A673 (cell line): ENCODE measurements at regions of chr7 and their contacts with region 1.

Region 1: DNA sequence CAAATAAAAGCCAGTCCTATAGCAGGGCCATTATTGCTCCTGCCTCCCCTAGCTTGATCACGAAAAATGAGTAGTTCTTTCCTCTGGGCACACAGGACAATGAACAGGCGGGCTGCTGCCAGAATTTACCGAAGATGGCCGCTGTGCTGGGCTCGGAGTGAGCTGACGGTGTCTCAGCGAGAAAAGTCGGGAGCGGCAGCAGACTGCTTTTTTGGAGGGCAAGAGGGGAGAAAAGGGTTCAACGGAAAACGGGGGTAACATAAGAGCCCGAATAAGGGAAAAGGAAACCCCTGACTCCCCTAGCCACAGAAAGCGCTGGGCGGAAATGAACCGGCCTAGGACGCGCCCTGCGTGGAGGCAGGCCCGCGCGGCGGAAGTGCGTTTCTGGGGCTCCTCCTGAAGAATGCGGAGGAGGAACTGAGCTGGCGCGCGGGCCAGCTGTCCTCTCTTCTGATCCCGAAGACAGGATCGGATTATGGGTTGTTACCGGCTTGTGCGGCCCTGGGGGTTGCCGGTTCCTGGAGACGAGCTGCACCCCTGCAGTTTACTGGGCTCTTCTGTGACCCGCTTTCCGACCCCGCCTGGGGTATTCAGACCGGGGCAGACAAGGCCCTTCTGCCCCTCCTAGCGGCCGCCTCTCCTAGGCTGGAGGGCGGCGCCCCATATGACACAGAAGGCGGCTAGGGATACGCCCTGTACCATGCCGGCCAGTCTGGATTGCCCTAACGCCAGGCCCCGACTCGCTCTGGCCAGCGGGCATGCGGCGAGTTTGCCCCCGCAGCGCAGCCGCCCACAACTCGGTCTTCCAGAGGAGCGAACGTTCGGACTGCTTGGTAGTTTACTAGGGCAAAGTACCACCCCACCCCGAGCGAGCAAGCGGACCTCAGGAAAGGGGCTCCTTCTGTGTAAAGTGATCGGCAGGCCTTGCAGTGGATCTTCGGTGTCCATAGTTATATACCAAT is 30.1 kb upstream of the KMT2E start:
- DNase-seq: peak; percentile 92
- H3K4me3 ChIP-seq: peak overlapping the region; percentile 60
- H3K27ac ChIP-seq: peak overlapping the region; percentile 97
- H3K4me1 ChIP-seq: peaks cover 77% of the 10 kb centered on the region
- H3K27me3 ChIP-seq: no peaks in the 10 kb centered on the region
- CTCF ChIP-seq: peak; percentile 36; the same call in 1 of the 2 replicates

Region 2: DNA sequence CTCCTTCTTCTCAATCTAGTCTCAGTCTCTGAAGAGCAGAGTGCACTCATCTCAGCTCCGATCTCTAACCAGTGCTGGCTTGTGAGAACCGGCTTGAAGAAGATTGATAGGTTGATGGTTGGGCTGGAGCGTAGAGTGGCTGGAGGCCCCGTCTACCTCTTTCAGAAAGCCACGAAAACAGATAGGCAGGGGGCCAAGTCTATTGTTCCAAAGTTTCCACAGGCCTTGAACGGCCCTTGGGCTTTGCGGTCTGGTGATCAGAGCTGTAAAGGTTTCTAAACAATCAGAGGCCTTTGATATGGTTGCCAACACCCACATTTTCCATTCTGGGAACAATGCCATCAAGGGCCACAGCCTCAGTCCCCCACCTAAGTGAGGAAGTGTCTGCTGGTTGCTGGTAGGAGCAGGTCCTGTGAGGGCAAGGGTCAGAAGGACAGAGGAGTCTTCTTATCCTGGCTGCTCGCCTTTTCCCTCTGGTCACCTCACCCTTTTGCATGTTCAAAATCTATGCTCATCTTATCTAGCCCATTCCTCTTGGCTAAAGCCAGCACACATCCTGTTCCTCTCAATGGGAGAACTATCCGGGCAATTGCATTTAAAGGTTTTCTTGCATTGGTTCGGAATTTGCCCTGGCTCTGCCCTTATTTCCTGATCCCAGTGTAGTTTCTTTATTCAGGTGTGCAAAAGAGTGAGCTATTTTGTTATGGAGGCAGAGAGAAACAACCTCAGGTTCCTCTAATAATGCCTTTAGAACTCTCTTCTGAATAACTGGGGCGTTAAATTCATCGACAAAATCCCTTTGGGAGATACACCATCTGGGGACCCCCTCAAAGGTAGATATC is 40.1 kb before region 1 on chr7:
- CTCF ChIA-PET with region 1: no interaction called
- POLR2A ChIA-PET with region 1: no interaction called
- intact Hi-C with region 1: loop called (anchors 2 kb)
- DNase-seq: no peak
- H3K4me3 ChIP-seq: no peak overlapping the region
- H3K27ac ChIP-seq: no peak overlapping the region
- H3K4me1 ChIP-seq: peaks cover 17% of the 10 kb centered on the region
- H3K27me3 ChIP-seq: no peaks in the 10 kb centered on the region
- CTCF ChIP-seq: no peak

Region 3: GRCh38 chr7:105106473-105106872 is 122.6 kb after region 1 on chr7:
- CTCF ChIA-PET with region 1: no interaction called
- POLR2A ChIA-PET with region 1: no interaction called
- intact Hi-C with region 1: loop called (anchors 5 kb)
- DNase-seq: peak; percentile 11
- H3K4me3 ChIP-seq: no peak overlapping the region
- H3K27ac ChIP-seq: peak overlapping the region; percentile 64
- H3K4me1 ChIP-seq: peaks cover 16% of the 10 kb centered on the region
- H3K27me3 ChIP-seq: no peaks in the 10 kb centered on the region
- CTCF ChIP-seq: no peak

Region 4: GRCh38 chr7:105315357-105315756 is 331.5 kb after region 1 on chr7:
- CTCF ChIA-PET with region 1: no interaction called
- POLR2A ChIA-PET with region 1: no interaction called
- intact Hi-C with region 1: no loop called
- DNase-seq: no peak
- H3K4me3 ChIP-seq: no peak overlapping the region
- H3K27ac ChIP-seq: no peak overlapping the region
- H3K4me1 ChIP-seq: no peaks in the 10 kb centered on the region
- H3K27me3 ChIP-seq: no peaks in the 10 kb centered on the region
- CTCF ChIP-seq: no peak

Region 5: GRCh38 chr7:105336009-105336408 is 352.1 kb after region 1 on chr7:
- CTCF ChIA-PET with region 1: interaction called, 3 read pairs
- POLR2A ChIA-PET with region 1: no interaction called
- intact Hi-C with region 1: loop called (anchors 5 kb)
- DNase-seq: peak; percentile 29
- H3K4me3 ChIP-seq: no peak overlapping the region
- H3K27ac ChIP-seq: no peak overlapping the region
- H3K4me1 ChIP-seq: peaks cover 6% of the 10 kb centered on the region
- H3K27me3 ChIP-seq: no peaks in the 10 kb centered on the region
- CTCF ChIP-seq: peak; percentile 66

Region 6: DNA sequence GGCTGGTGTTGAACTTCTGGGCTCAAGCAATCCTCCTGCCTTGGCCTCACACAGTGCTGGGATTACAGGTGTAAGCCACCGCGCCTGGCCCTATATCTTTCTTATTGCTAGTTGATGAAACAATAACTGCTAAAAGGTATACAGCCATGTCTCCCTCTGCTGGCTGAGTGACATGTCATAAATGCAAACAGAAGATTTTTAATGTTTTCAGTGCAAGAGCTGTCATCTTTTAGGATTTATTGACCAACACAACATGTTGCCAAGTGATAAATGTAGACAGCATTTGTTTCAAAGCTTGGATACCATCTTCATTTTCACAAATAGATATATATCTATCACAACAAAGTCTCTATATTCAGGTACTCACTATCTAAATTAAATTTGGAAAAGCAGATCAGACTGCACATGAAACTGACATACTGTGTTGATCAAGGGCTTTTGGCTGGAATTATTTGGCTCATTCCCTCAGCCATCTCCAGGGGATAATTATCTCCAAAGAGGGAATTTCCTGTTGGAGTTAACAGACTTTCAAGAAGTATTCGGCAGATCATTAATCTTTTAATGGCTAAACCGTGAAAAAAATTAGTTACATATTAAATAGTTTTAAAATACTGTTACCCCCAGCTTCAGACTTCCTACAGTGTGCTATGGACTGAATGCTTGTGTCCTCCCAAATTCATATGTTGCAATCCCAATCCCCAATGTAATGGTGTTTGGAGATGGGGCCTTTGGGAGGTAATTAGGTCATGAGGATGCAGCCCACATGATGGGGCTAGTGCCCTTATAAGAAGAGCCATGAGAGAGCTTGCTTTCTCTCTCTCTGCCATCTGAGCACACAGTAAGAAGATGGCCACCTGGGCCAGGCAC is 446.1 kb after region 1 on chr7:
- CTCF ChIA-PET with region 1: interaction called, 5 read pairs
- POLR2A ChIA-PET with region 1: no interaction called
- intact Hi-C with region 1: loop called (anchors 2 kb)
- DNase-seq: peak; percentile 93
- H3K4me3 ChIP-seq: no peak overlapping the region
- H3K27ac ChIP-seq: no peak overlapping the region
- H3K4me1 ChIP-seq: peaks cover 17% of the 10 kb centered on the region
- H3K27me3 ChIP-seq: peaks cover 21% of the 10 kb centered on the region
- CTCF ChIP-seq: peak; percentile 73